PC-9 (cell line): ENCODE measurements at regions of chr7 and their contacts with region 1.

Region 1: GRCh38 chr7:35185907-35186731 is 67.8 kb downstream of the TBX20 start:
- DNase-seq: peak in 1 of 2 experiments; percentile 25
- H3K4me3 ChIP-seq: no peak overlapping the region; the same call in 1 of the 2 replicates
- H3K27ac ChIP-seq: no peak overlapping the region
- H3K4me1 ChIP-seq: no peaks in the 10 kb centered on the region
- H3K27me3 ChIP-seq: no peaks in the 10 kb centered on the region
- CTCF ChIP-seq: no peak

Region 2: GRCh38 chr7:35241884-35242283 is 55.8 kb after region 1 on chr7:
- CTCF ChIA-PET with region 1: no interaction called
- POLR2A ChIA-PET with region 1: no interaction called
- intact Hi-C with region 1: loop called (anchors 10 kb)
- DNase-seq: no peak
- H3K4me3 ChIP-seq: no peak overlapping the region
- H3K27ac ChIP-seq: peak overlapping the region; percentile 81
- H3K4me1 ChIP-seq: peaks cover 22% of the 10 kb centered on the region
- H3K27me3 ChIP-seq: no peaks in the 10 kb centered on the region
- CTCF ChIP-seq: no peak

Region 3: DNA sequence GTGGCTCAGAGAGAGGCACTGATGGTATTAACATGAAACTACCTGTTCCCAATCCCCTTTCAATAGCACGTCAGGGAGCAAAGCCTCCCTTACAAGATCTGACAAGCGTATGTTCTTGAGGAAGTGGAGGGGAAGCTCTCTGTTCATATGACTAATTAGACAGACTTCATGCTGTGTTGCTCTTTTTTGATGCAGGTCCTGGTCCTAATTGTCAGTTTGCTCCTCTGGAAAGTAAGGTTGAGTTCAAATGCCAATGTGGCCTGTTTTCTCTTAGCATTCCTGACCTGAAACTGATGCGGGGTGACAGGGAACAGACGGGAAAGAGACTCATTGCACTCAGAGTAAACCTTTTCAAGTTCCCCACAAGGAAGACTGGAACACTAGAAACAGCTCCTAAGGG is 94.8 kb after region 1 on chr7:
- CTCF ChIA-PET with region 1: no interaction called
- POLR2A ChIA-PET with region 1: no interaction called
- intact Hi-C with region 1: no loop called
- DNase-seq: no peak
- H3K4me3 ChIP-seq: no peak overlapping the region
- H3K27ac ChIP-seq: no peak overlapping the region
- H3K4me1 ChIP-seq: no peaks in the 10 kb centered on the region
- H3K27me3 ChIP-seq: no peaks in the 10 kb centered on the region
- CTCF ChIP-seq: no peak

Region 4: DNA sequence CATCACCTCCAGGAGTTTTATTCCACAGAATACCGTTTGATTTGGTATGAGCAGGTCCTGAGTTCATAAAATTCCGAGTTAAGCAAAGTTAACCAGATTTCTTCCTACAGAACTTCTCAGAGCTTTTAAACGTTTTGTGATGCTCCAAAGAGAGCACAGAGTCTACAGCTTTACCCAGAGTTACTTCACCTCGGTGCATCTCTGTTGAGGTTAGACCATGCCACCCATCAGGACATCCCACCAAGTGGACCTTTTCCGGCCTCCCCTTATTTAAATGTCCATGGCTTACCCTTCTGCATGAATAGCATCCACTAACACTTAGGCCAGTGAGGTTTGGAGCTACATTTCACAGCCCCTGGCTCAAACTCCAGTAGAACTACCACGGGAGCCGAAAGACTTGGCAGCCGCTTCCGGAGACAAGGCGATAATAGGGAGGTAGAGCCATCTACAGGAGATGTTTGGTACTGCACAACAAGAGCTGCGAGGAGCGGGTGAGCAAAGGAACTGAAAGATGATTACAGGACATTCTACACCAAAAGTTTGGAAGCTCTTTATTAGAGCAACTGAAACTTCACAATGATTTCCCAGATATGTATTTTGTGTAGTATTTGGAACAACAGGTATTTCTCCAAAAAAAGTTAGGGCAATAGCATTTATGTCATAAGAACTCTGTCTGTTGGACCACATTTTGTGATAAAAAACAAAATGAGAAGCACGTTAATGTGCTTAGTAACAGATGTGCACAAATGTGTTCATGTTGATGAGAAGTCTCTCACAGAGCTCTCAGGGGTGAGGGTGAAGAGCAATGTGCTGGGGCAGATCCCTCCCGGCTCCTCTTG is 334.1 kb after region 1 on chr7:
- CTCF ChIA-PET with region 1: interaction called, 3 read pairs
- POLR2A ChIA-PET with region 1: no interaction called
- intact Hi-C with region 1: loop called (anchors 5 kb)
- DNase-seq: peak; percentile 55 to 61
- H3K4me3 ChIP-seq: no peak overlapping the region
- H3K27ac ChIP-seq: no peak overlapping the region
- H3K4me1 ChIP-seq: peaks cover 21% of the 10 kb centered on the region
- H3K27me3 ChIP-seq: no peaks in the 10 kb centered on the region
- CTCF ChIP-seq: peak; percentile 100

Region 5: DNA sequence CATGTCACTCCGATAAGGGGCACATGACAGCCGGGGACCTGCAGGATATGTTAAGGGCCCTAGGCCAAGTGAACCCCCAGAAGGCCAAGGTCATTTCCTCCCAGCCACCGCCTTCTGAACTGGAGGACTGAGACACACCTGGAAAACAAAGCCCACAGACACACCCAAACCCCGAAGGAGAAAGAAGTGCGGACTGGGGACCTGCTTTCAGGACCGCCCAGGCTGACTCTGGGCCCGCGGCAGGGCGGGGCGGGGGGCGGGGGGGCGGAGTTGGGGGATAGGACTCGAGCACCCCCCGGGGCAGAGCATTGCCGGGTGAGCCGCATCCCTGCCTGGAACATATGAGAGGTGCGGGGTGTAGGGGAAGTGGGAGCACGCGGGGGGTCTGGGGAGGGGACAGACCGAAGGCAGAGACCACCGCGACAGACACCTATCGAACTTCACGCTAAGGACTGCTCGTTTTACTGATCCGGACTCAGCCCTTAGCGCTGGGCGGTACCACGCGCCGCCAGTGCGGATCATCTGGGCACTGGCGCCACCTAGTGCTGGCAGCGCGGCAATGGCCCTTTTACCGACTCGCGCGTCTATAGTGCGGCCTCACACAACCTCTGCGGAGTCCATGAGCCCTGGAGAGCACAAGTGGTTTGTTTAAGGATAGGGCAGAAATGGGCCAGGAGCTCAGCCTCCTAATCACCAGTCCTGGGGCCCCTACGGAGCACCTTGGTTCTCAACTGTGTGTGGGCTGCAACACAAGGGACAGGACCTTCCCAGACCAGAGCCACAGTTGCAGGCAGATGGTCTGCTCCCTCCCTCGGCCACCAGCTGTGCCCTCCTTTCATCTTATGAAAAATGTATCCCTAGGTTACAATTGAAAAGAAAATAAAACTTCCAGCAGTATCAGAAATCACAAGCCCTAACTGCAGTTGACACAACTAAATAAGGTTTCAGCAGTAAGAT is 351.2 kb after region 1 on chr7:
- CTCF ChIA-PET with region 1: no interaction called
- POLR2A ChIA-PET with region 1: no interaction called
- intact Hi-C with region 1: loop called (anchors 2 kb)
- DNase-seq: peak; percentile 56 to 73
- H3K4me3 ChIP-seq: peak overlapping the region; percentile 55
- H3K27ac ChIP-seq: no peak overlapping the region
- H3K4me1 ChIP-seq: 0 out of 2 replicates have a peak, but pooled peaks cover 9% of the 10 kb centered on the region
- H3K27me3 ChIP-seq: 0 out of 2 replicates have a peak, but pooled peaks cover 18% of the 10 kb centered on the region
- CTCF ChIP-seq: peak; percentile 100

Region 6: DNA sequence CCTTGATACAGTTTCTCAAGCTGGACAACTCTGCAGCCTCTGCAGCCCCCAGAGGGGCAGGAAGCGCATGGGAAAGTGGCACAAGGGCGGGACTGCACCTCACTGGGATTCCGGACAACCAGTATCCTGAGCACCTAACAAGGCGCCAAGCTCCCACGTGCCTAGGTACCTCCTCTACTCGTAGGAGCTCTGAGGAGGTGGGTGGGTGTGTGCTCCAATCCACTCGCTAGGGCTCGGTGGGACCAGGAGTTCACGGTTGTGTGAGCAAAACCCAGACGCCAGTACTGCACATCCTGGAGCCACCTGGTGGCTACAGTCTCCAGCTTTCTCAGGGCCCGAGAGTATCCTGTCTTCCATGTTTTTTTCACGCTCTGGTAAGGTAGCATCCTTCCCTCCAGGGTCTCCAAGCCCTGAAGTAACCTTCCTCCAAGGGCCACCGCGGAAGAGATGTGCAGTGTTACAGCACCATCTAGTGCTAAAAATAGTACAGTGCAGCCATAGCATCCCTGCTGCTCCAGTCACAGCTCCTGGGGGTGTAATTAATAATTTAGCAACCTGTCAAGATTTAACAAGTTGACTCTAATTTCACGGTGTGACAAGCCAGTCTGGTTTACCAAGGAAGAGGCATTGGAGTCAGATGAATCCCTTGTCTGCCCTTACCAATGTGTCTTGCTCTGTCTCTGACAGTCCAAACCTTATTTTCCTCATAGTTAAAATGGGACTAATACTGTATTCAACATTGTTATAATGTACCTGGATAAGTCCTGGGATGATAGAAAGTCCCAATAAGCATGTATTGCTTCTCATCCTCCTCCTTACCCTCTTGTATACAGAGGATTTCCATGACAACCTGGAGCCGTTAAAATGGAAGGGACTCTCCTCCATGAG is 438.4 kb after region 1 on chr7:
- CTCF ChIA-PET with region 1: no interaction called
- POLR2A ChIA-PET with region 1: no interaction called
- intact Hi-C with region 1: loop called (anchors 10 kb)
- DNase-seq: peak in 1 of 2 experiments; percentile 32
- H3K4me3 ChIP-seq: no peak overlapping the region
- H3K27ac ChIP-seq: no peak overlapping the region
- H3K4me1 ChIP-seq: no peaks in the 10 kb centered on the region
- H3K27me3 ChIP-seq: no peaks in the 10 kb centered on the region
- CTCF ChIP-seq: peak; percentile 93